GM12878 (cell line): ENCODE measurements at regions of chr1 and their contacts with region 1.

Region 1: GRCh38 chr1:84810343-84810742 is 82.7 kb downstream of the LPAR3 start:
- DNase-seq: no peak
- ATAC-seq: no peak
- H3K4me3 ChIP-seq: no peak overlapping the region
- H3K27ac ChIP-seq: no peak overlapping the region
- H3K4me1 ChIP-seq: peaks cover 7% of the 10 kb centered on the region; the same call in 1 of the 2 replicates
- H3K27me3 ChIP-seq: no peaks in the 10 kb centered on the region
- CTCF ChIP-seq: no peak
- EP300 ChIP-seq: no peak
- POLR2A ChIP-seq: no peak
- RAD21 ChIP-seq: no peak

Region 2: DNA sequence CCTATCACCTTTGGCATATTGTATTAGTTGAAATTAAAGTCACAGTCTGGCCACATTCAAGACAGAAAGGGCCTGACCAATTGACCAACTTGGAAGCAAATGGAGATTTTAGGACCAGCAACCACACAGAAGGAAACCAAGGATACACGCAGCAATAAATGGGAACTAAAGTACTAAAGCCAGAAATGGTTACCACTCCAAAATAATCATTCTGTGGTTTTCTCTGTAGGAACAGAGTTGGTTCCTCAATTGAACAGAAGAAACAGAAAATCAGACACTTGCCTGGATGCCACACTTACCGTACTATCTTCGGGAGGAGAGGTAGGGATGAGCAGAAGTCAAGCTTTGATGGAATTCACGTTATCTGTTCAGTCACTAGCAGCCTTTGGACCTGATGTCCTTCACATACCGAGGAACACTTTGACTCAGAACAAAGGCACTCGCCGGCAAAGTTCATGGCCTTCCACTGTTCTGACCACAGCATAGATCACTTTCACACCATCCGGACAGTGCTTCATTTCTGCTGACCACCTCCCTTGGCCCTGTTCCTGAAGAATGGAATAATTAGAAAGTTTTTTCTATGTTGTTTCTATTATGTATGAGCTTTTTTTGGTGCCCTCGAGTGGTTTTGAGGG is 14.3 kb before region 1 on chr1:
- CTCF ChIA-PET with region 1: interaction called, 3 read pairs
- POLR2A ChIA-PET with region 1: no interaction called
- RAD21 ChIA-PET with region 1: no interaction called
- SMC1A ChIA-PET with region 1: interaction called, 3 read pairs
- in situ Hi-C with region 1: no loop called
- intact Hi-C with region 1: loop called (anchors 2 kb)
- DNase-seq: no peak
- ATAC-seq: no peak
- H3K4me3 ChIP-seq: no peak overlapping the region
- H3K27ac ChIP-seq: no peak overlapping the region
- H3K4me1 ChIP-seq: no peaks in the 10 kb centered on the region
- H3K27me3 ChIP-seq: no peaks in the 10 kb centered on the region
- CTCF ChIP-seq: no peak
- EP300 ChIP-seq: no peak
- POLR2A ChIP-seq: no peak
- RAD21 ChIP-seq: no peak

Region 3: GRCh38 chr1:84833198-84833597 is 22.9 kb after region 1 on chr1:
- CTCF ChIA-PET with region 1: no interaction called
- POLR2A ChIA-PET with region 1: no interaction called
- RAD21 ChIA-PET with region 1: no interaction called
- SMC1A ChIA-PET with region 1: no interaction called
- in situ Hi-C with region 1: no loop called
- intact Hi-C with region 1: no loop called
- DNase-seq: no peak
- ATAC-seq: no peak
- H3K4me3 ChIP-seq: no peak overlapping the region
- H3K27ac ChIP-seq: no peak overlapping the region
- H3K4me1 ChIP-seq: no peaks in the 10 kb centered on the region
- H3K27me3 ChIP-seq: peaks cover 0 to 2% of the 10 kb centered on the region in 2 experiments; a peak in 1 of 4 replicates
- CTCF ChIP-seq: no peak
- EP300 ChIP-seq: no peak
- POLR2A ChIP-seq: no peak
- RAD21 ChIP-seq: no peak

Region 4: DNA sequence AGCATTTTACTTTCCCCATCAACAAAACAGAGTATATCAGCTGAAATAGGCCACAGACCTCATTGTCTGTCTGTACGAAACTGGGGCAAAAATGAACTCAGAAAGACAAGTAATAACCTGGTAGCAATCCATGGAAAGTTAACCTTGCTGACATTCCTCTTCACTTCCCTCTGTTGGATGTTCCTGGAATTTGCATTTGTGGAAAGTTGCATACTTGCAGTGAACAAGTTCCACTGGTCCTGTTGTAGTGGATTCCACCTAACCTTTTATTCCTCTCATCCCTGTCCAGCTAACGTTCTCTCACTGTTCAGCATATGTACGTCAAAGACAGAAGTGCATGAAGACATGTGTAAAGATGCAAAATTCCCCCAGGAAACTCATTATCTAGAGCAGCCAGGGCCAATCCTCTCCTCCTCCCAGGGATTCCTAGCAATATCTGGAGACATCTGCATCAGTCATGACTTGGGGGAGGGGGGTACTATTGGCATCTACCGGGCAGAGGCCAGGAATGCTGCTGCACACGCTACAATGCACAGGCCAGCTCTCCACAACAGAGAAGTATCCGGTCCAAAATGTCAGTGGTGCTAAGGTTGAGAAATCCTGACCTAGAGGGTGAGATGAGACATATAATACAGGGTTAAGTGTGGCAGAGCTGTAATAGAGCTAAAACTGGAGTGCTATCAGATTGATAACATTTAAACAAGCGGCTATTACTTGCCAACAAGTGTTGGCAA is 74.5 kb after region 1 on chr1:
- CTCF ChIA-PET with region 1: no interaction called
- POLR2A ChIA-PET with region 1: no interaction called
- RAD21 ChIA-PET with region 1: no interaction called
- SMC1A ChIA-PET with region 1: no interaction called
- in situ Hi-C with region 1: no loop called
- intact Hi-C with region 1: no loop called
- DNase-seq: no peak
- ATAC-seq: no peak
- H3K4me3 ChIP-seq: no peak overlapping the region
- H3K27ac ChIP-seq: no peak overlapping the region
- H3K4me1 ChIP-seq: no peaks in the 10 kb centered on the region
- H3K27me3 ChIP-seq: no peaks in the 10 kb centered on the region; a peak in 1 of 4 replicates
- CTCF ChIP-seq: no peak
- EP300 ChIP-seq: no peak
- POLR2A ChIP-seq: no peak
- RAD21 ChIP-seq: no peak